GM23248 (cell line): ENCODE measurements at regions of chr10 and their contacts with region 1.

Region 1: GRCh38 chr10:92873029-92873428 is 24.7 kb downstream of the EXOC6 start:
- DNase-seq: no peak
- H3K4me3 ChIP-seq: no peak overlapping the region
- H3K27ac ChIP-seq: no peak overlapping the region
- H3K4me1 ChIP-seq: 0 out of 2 replicates have a peak, but pooled peaks cover 4% of the 10 kb centered on the region
- H3K27me3 ChIP-seq: no peaks in the 10 kb centered on the region

Region 2: GRCh38 chr10:92342796-92343195 is 530.2 kb before region 1 on chr10:
- in situ Hi-C with region 1: no loop called
- DNase-seq: peak; percentile 52
- H3K4me3 ChIP-seq: no peak overlapping the region
- H3K27ac ChIP-seq: no peak overlapping the region
- H3K4me1 ChIP-seq: peaks cover 10% of the 10 kb centered on the region
- H3K27me3 ChIP-seq: no peaks in the 10 kb centered on the region

Region 3: GRCh38 chr10:92527716-92528115 is 345.3 kb before region 1 on chr10:
- in situ Hi-C with region 1: loop called (anchors 10 kb)
- DNase-seq: no peak
- H3K4me3 ChIP-seq: no peak overlapping the region
- H3K27ac ChIP-seq: no peak overlapping the region
- H3K4me1 ChIP-seq: no peaks in the 10 kb centered on the region; the same call in 1 of the 2 replicates
- H3K27me3 ChIP-seq: no peaks in the 10 kb centered on the region

Region 4: GRCh38 chr10:92619368-92619767 is 253.7 kb before region 1 on chr10:
- in situ Hi-C with region 1: no loop called
- DNase-seq: no peak
- H3K4me3 ChIP-seq: no peak overlapping the region
- H3K27ac ChIP-seq: no peak overlapping the region
- H3K4me1 ChIP-seq: no peaks in the 10 kb centered on the region
- H3K27me3 ChIP-seq: no peaks in the 10 kb centered on the region

Region 5: DNA sequence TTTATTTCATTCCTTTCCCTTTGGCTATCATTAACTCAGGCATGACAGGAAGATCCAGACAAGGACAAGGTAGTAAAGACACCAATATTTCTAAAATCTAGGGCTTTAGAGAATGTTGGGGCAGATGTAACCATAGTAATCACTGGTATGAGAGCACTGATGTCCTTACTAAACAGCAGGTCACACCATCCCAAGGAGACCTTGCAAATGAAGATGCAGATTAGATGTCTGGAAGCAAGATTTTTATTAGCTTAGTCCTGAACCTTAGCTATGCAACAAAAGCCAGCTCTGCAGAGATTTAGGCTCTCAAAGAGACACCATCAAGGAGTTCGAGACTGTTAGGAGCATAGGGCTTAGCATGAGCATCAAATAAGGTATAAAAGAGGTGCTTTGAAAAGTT is 853.0 kb after region 1 on chr10:
- in situ Hi-C with region 1: no loop called
- DNase-seq: no peak
- H3K4me3 ChIP-seq: no peak overlapping the region
- H3K27ac ChIP-seq: no peak overlapping the region
- H3K4me1 ChIP-seq: no peaks in the 10 kb centered on the region
- H3K27me3 ChIP-seq: peaks cover 42% of the 10 kb centered on the region